ENCODE measurements at regions of chr3 and their contacts with region 1.

Region 1: DNA sequence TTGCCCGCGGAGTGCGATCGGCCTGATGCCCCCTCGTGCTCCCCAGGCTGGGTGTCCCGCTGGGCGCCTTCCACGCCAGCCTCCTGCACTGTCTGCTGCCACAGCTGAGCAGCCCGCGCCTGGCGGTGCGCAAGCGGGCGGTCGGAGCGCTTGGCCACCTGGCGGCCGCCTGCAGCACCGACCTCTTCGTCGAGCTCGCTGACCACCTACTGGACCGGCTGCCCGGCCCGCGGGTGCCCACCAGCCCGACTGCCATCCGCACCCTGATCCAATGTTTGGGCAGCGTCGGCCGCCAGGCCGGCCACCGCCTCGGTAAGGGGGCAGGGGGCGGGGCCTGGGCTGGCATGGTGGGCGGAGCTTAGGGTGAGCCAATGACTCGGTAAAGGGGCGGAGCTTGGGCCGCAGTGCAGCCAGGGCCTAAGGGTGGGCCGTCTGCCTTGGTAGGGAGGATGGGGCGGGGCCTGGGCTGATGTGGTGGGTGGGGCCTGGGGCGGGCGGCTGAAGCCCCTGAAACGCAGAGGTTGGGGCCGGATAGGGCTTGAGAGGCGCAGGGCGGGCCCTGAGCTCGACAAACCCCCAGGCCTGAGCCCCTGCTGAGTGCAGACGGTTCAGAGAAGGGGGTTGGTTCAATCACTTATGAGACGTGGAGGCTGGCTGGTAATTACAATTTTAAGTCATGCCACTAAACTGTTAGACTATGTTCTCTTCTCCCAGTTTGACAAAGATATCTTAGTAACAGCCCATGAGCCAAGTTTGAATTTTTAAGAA is 13.7 kb downstream of the CAND2 start:
- DNase-seq: peak; percentile 91 to 95 (median 93)
- H3K4me3 ChIP-seq: peak overlapping the region in 1 of 2 donors; percentile 51
- H3K4me3 Mint-ChIP-seq: peak overlapping the region; percentile 66 to 78 (median 70)
- H3K27ac ChIP-seq: peak overlapping the region; percentile 9
- H3K27ac Mint-ChIP-seq: peak overlapping the region; percentile 14 to 87 (median 79)
- H3K4me1 ChIP-seq: peaks cover 13% of the 10 kb centered on the region
- H3K4me1 Mint-ChIP-seq: peaks cover 0 to 21% (median 11%) of the 10 kb centered on the region in 4 donors
- H3K27me3 ChIP-seq: no peaks in the 10 kb centered on the region
- H3K27me3 Mint-ChIP-seq: no peaks in the 10 kb centered on the region

Region 2: DNA sequence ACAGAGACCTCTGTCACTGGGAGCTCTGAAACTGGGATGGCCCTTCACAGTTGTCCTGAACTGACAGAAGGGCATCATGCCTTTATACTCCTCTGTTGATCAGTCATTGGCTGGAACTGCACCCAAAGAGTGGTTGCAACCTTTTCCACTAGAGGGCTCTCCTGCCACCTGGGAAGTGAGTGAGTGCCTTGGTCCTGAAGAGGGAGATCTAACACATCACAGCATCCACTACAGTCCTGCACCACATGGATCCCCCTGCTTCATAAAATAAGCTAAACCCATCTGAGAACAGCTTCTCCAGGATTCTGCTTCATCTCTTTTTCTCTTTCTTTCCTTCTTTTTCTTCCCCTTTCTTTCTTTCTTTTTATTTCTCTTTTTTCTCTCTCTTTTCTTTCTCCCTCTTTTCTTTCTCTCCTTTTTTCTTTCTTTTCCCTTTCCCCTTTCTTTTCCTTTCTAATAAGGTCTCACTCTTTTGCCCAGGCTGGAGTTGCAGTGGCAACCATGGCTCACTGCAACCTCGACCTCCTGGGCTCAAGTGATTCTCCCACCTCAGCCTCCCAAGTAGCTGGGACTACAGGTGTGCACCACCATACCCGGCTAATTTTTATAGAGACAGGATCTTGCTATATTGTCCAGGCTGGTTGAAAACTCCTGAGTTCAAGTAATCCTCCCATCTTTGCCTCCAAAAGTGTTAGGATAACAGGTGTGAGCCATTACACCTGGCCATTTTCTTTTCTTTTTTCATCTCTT is 103.5 kb before region 1 on chr3:
- CTCF ChIA-PET with region 1: interaction called, 3 read pairs
- POLR2A ChIA-PET with region 1: no interaction called
- intact Hi-C with region 1: loop called (anchors 1 kb)
- DNase-seq: peak; percentile 46 to 61 (median 52)
- H3K4me3 ChIP-seq: no peak overlapping the region
- H3K4me3 Mint-ChIP-seq: no peak overlapping the region
- H3K27ac ChIP-seq: no peak overlapping the region
- H3K27ac Mint-ChIP-seq: no peak overlapping the region
- H3K4me1 ChIP-seq: no peaks in the 10 kb centered on the region
- H3K4me1 Mint-ChIP-seq: no peaks in the 10 kb centered on the region
- H3K27me3 ChIP-seq: no peaks in the 10 kb centered on the region
- H3K27me3 Mint-ChIP-seq: peaks cover 1 to 9% of the 10 kb centered on the region in 2 donors

Region 3: DNA sequence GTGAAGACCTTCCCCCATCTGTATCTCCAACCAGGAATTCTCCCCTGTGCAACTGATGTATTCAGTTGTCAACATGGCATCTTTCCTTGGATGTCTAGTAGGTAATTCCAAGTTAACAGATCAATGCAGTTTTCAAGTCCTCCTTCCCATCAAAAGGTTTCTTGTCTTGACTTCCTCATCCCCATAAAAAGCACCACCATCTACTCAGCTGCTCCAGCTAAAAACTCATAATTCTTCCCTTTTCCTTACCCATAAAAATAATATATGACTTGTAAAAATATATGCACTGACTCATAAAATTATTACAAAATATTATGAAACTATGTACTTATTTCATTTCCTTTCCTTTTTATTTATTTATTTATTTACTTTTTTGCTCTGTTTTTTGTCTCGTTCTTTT is 18.8 kb before region 1 on chr3:
- CTCF ChIA-PET with region 1: interaction called, 61 read pairs
- POLR2A ChIA-PET with region 1: interaction called, 21 read pairs
- intact Hi-C with region 1: loop called (anchors 1 kb)
- DNase-seq: no peak
- H3K4me3 ChIP-seq: no peak overlapping the region
- H3K4me3 Mint-ChIP-seq: no peak overlapping the region
- H3K27ac ChIP-seq: no peak overlapping the region
- H3K27ac Mint-ChIP-seq: peak overlapping the region in 1 of 7 donors; percentile 39
- H3K4me1 ChIP-seq: peaks cover 9% of the 10 kb centered on the region
- H3K4me1 Mint-ChIP-seq: peaks cover 0 to 8% (median 4%) of the 10 kb centered on the region in 4 donors
- H3K27me3 ChIP-seq: no peaks in the 10 kb centered on the region
- H3K27me3 Mint-ChIP-seq: peaks cover 0 to 6% of the 10 kb centered on the region in 2 donors

Region 4: GRCh38 chr3:12796171-12797123 is 13.8 kb before region 1 on chr3 and contains the start of gene CAND2:
- CTCF ChIA-PET with region 1: interaction called, 55 read pairs
- POLR2A ChIA-PET with region 1: interaction called, 21 read pairs
- intact Hi-C with region 1: loop called (anchors 1 kb)
- DNase-seq: peak; percentile 25 to 52 (median 37)
- H3K4me3 ChIP-seq: peak within 1 kb of the TSS; percentile 43 to 52
- H3K4me3 Mint-ChIP-seq: peak within 1 kb of the TSS; percentile 86 to 90 (median 87)
- H3K27ac ChIP-seq: peak within 1 kb of the TSS; percentile 38
- H3K27ac Mint-ChIP-seq: peak within 1 kb of the TSS in 6 of 7 donors; percentile 60 to 84 (median 76)
- H3K4me1 ChIP-seq: peaks cover 9% of the 10 kb centered on the region
- H3K4me1 Mint-ChIP-seq: peaks cover 2 to 22% (median 11%) of the 10 kb centered on the region in 4 donors
- H3K27me3 ChIP-seq: no peaks in the 10 kb centered on the region
- H3K27me3 Mint-ChIP-seq: peaks cover 0 to 6% of the 10 kb centered on the region in 2 donors
- total RNA-seq, gene CAND2: 1.9 to 2.2 TPM

Region 5: DNA sequence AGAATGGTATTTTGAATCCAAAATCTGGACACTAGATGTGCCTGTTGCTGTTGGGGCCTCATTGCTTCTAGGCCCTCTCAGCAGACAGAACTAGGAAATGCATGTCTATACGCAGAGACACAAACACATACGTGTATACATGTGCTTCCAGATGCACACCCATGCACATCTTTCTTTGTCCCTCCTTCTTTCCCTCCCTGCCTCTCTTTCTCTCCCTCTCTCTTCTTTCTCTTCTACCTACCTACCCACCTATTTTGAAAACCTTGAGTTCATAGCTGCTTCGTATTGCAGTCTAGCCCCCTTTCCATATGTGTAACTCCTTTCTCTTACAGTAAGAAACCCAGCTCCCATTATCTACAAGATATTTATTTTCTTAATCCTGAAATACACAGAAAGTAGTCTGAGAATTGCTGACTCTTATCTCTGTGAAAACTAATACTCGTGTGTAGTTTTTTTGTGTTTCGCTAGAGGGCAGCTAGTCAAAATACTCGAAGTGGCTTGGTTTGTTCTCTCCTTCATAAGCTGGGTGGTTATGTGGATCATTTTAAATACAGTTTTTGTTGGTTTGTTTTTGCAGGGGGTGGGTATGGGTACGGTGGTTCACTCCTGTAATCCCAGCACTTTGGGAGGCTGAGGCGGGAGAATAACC is 12.7 kb after region 1 on chr3:
- CTCF ChIA-PET with region 1: interaction called, 11 read pairs
- POLR2A ChIA-PET with region 1: no interaction called
- intact Hi-C with region 1: no loop called
- DNase-seq: no peak
- H3K4me3 ChIP-seq: no peak overlapping the region
- H3K4me3 Mint-ChIP-seq: no peak overlapping the region
- H3K27ac ChIP-seq: no peak overlapping the region
- H3K27ac Mint-ChIP-seq: no peak overlapping the region
- H3K4me1 ChIP-seq: no peaks in the 10 kb centered on the region
- H3K4me1 Mint-ChIP-seq: no peaks in the 10 kb centered on the region
- H3K27me3 ChIP-seq: no peaks in the 10 kb centered on the region
- H3K27me3 Mint-ChIP-seq: no peaks in the 10 kb centered on the region